Left lung (tissue), 14 donors: ENCODE measurements at regions of chr3 and their contacts with region 1.

Region 1: DNA sequence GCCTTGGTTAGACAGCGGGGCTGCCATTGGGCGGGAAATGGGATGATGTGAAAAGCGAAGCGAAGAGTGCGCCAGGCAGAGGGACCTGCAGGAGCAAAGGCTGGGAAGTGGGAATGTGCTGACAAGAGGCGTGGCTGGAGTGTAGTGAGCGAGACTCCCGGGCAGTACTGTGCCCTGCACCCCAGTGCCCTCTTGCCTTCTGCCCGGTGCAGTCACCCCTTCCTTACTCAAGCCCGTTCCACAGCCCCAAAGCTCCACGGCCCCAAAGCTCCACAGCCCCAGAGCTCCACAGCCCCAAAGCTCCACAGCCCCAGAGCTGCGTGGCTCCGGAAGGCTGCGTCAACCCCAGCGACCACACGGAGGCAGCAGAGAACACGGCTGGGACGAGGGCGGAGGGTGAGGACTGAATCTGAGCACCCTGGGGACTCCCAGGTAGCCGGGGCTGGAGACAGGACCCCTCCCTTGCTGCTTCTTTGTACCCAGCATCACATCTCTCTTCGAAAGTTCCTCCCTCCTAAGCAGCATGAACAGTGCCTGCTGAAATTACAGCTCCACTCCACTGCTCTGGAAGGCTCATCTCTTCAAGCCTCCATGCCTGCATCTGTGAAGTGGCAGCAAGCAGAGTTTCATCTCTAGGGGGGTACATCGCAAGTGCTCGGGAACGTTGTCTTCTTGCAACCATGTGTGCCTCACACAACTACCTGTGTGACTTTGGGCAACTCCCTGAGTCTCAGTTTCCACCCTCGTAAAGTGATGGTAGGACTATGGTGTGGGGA is 108.9 kb downstream of the FBLN2 start:
- DNase-seq: peak in 1 of 4 donors; percentile 54
- ATAC-seq: peak; percentile 93
- H3K4me3 ChIP-seq: no peak overlapping the region
- H3K27ac ChIP-seq: no peak overlapping the region
- H3K4me1 ChIP-seq: peaks cover 0 to 10% of the 10 kb centered on the region in 2 donors
- H3K27me3 ChIP-seq: peaks cover 3 to 59% of the 10 kb centered on the region in 2 donors
- CTCF ChIP-seq: peak; percentile 40 to 69

Region 2: GRCh38 chr3:12916159-12916558 is 741.7 kb before region 1 on chr3:
- intact Hi-C with region 1: no loop called
- DNase-seq: no peak
- ATAC-seq: peak; percentile 7
- H3K4me3 ChIP-seq: no peak overlapping the region
- H3K27ac ChIP-seq: no peak overlapping the region
- H3K4me1 ChIP-seq: no peaks in the 10 kb centered on the region
- H3K27me3 ChIP-seq: no peaks in the 10 kb centered on the region
- CTCF ChIP-seq: no peak

Region 3: DNA sequence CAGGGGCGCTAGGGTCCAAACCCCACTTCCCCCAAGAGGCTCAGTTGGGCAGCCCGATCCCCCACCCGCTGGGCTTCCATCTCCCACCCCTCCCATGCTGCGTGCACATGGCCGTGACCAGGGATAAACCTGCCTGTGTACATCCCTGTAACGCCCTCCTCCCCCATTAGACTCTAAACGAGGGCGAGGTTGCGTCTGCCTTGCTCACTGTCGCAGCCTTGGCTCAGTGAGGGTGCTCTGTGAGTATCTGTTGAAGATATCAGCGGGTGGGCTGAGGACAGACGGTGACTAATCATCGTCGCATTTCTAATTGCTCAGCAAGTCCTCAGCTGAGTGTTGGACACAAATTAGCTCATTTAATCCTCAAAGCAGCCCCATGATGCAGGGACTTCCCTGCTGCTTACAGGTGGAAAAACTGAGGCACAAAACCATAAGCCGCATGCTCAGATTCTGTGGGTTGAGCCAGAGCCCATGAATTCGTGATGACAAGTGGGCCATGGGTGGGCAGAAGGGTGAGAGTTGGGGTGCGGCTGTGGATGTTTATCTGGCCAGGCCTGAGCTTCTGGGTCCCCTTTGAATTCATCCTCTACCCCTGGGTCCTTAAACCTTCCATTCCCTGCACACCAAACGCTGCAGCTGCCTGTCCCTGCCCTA is 82.9 kb before region 1 on chr3:
- intact Hi-C with region 1: no loop called
- DNase-seq: peak in 1 of 4 donors; percentile 55
- ATAC-seq: peak; percentile 35
- H3K4me3 ChIP-seq: no peak overlapping the region
- H3K27ac ChIP-seq: no peak overlapping the region
- H3K4me1 ChIP-seq: no peaks in the 10 kb centered on the region
- H3K27me3 ChIP-seq: peaks cover 0 to 5% of the 10 kb centered on the region in 2 donors
- CTCF ChIP-seq: no peak

Region 4: GRCh38 chr3:13600941-13601576 is 56.8 kb before region 1 on chr3:
- intact Hi-C with region 1: no loop called
- DNase-seq: peak in 1 of 4 donors; percentile 71
- ATAC-seq: no peak
- H3K4me3 ChIP-seq: no peak overlapping the region
- H3K27ac ChIP-seq: no peak overlapping the region
- H3K4me1 ChIP-seq: no peaks in the 10 kb centered on the region
- H3K27me3 ChIP-seq: no peaks in the 10 kb centered on the region
- CTCF ChIP-seq: no peak

Region 5: DNA sequence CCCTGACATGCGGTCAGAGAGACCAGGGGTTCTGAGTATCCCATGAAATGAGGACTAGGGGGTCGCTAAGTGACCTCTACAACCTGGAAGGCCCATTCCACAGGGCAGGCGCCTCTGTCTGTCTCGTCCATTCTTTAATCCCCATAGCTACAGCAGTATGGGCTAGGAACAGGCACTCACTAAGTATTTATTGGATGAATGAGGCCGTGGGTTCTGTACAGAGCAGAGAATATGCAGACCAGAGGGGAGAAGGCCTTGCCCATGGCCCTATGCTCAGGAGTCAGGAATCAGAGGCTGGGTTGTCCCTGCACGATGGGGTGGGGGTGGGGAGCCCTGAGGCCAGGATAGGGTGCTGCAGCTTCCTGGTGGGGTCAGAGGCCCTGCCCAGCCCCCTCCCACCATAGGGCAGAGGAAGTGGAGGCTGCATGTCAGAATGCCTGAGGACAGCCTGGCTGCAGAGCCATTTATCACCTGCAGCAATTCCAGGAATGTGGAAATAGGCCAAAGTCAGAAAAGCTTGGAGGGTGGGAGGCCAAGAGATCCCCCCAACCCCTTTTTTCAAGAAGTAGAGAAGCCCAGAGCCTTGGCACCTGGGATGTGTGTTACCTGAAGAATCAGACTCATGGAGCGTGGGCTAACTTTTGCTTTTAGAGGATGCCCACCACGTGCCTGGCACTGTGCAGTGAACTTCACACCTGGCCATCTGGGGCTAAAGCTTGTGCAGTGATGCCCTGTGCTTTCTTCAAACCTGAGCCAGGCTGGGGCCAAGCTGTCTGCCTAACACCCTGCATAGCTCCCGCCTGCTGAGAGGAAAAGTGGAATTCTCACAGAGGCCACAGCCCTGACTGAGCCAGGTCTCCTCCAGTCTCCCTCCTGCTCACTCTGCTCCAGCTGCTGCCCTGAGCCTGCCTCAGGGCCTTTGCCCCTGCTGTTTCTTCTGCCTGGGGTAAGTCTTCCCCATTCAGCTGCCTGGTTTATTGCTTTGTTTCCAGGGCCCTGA is 112.6 kb after region 1 on chr3:
- intact Hi-C with region 1: no loop called
- DNase-seq: peak in 1 of 4 donors; percentile 31
- ATAC-seq: no peak
- H3K4me3 ChIP-seq: no peak overlapping the region
- H3K27ac ChIP-seq: no peak overlapping the region
- H3K4me1 ChIP-seq: no peaks in the 10 kb centered on the region
- H3K27me3 ChIP-seq: no peaks in the 10 kb centered on the region
- CTCF ChIP-seq: no peak

Region 6: GRCh38 chr3:13884851-13885703 is 227.2 kb after region 1 on chr3:
- intact Hi-C with region 1: loop called in 1 of 2 experiments (anchors 5 kb)
- DNase-seq: peak in 1 of 4 donors; percentile 53
- ATAC-seq: peak; percentile 84
- H3K4me3 ChIP-seq: no peak overlapping the region
- H3K27ac ChIP-seq: no peak overlapping the region
- H3K4me1 ChIP-seq: peaks cover 0 to 9% of the 10 kb centered on the region in 2 donors
- H3K27me3 ChIP-seq: peaks cover 27 to 42% of the 10 kb centered on the region in 2 donors
- CTCF ChIP-seq: peak; percentile 32 to 64